CD4-positive, alpha-beta memory T cell (primary cell): ENCODE measurements at regions of chr20 and their contacts with region 1.

Region 1: DNA sequence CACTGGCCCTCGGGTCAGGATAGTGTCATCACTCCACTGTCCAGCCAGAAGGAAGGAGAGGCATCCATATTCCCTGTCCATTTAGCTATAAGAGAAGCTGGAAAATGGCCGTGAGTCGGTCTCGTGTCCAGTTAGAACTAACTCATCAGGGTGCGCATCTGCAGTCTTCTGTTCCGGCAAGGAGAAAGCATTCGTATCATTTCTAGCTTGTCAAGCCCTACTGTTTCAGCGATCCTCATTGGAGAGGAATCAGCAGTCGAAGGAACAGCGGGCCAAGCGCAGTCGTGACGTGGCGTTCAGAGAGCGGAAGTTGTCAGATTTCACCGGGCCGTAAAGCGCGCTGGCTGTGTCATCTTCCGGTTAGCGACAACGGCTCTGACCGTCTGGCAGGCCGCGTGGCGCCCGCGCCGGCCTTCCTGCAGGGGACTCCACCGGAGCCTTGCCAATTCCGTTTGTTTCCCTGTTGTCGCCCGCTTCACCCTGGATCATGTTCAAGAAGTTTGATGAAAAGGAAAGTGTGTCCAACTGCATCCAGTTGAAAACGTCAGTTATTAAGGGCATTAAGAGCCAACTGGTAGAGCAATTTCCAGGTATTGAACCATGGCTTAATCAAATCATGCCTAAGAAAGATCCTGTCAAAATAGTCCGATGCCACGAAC is 32.9 kb downstream of the HM13 start:
- DNase-seq: peak; percentile 80 to 88 (median 82)
- H3K4me3 ChIP-seq: peak overlapping the region; percentile 45 to 62
- H3K4me3 Mint-ChIP-seq: peak overlapping the region; percentile 89 to 96 (median 94)
- H3K27ac ChIP-seq: peak overlapping the region; percentile 87
- H3K27ac Mint-ChIP-seq: peak overlapping the region; percentile 97 to 100 (median 99)
- H3K4me1 ChIP-seq: peaks cover 21% of the 10 kb centered on the region
- H3K4me1 Mint-ChIP-seq: peaks cover 12 to 32% (median 21%) of the 10 kb centered on the region in 4 donors
- H3K27me3 ChIP-seq: no peaks in the 10 kb centered on the region
- H3K27me3 Mint-ChIP-seq: no peaks in the 10 kb centered on the region

Region 2: GRCh38 chr20:31514159-31515071 is 32.7 kb before region 1 on chr20 and contains the start of gene HM13:
- CTCF ChIA-PET with region 1: interaction called, 3 read pairs
- POLR2A ChIA-PET with region 1: interaction called, 4 read pairs
- intact Hi-C with region 1: loop called (anchors 1 kb)
- DNase-seq: peak; percentile 86 to 89 (median 88)
- H3K4me3 ChIP-seq: peak within 1 kb of the TSS; percentile 58 to 90
- H3K4me3 Mint-ChIP-seq: peak within 1 kb of the TSS in 3 of 8 donors; percentile 10 to 83 (median 78)
- H3K27ac ChIP-seq: peak within 1 kb of the TSS; percentile 91
- H3K27ac Mint-ChIP-seq: peak within 1 kb of the TSS in 5 of 7 donors; percentile 30 to 92 (median 85)
- H3K4me1 ChIP-seq: peaks cover 43% of the 10 kb centered on the region
- H3K4me1 Mint-ChIP-seq: peaks cover 8 to 13% (median 11%) of the 10 kb centered on the region in 4 donors
- H3K27me3 ChIP-seq: no peaks in the 10 kb centered on the region
- H3K27me3 Mint-ChIP-seq: no peaks in the 10 kb centered on the region
- total RNA-seq, gene HM13: 133 to 156 TPM

Region 3: GRCh38 chr20:31788578-31788977 is 241.4 kb after region 1 on chr20:
- CTCF ChIA-PET with region 1: no interaction called
- POLR2A ChIA-PET with region 1: no interaction called
- intact Hi-C with region 1: no loop called
- DNase-seq: no peak
- H3K4me3 ChIP-seq: no peak overlapping the region
- H3K4me3 Mint-ChIP-seq: no peak overlapping the region
- H3K27ac ChIP-seq: no peak overlapping the region
- H3K27ac Mint-ChIP-seq: peak overlapping the region in 3 of 7 donors; percentile 23 to 73 (median 26)
- H3K4me1 ChIP-seq: no peaks in the 10 kb centered on the region
- H3K4me1 Mint-ChIP-seq: no peaks in the 10 kb centered on the region
- H3K27me3 ChIP-seq: no peaks in the 10 kb centered on the region
- H3K27me3 Mint-ChIP-seq: no peaks in the 10 kb centered on the region